ENCODE measurements at regions of chr17 and their contacts with region 1.

Region 1: GRCh38 chr17:60142872-60143499 is 6.8 kb upstream of the CA4 start:
- DNase-seq: peak; percentile 59 to 96 (median 88)

Region 2: DNA sequence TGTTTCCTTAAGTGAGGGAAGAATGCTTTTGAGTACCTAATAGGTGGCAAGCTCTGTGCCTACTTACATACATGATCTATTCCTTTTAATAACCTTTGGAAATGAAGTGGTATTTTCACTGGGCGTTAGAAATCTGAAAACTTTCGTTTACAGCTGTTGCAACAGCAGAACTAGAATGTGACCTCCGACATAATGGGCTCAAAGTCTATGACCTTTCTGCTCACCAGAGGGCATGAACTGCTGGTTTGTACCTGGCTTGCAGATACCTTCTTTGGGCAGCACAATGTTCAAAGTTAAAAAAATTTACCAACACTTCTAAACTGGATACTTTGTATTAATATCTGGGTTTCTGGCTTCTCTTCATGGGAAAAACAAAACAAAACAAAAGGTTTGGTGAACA is 31.0 kb after region 1 on chr17:
- intact Hi-C with region 1: loop called (anchors 2 kb)
- DNase-seq: no peak